ENCODE measurements at regions of chr6 and their contacts with region 1.

Region 1: GRCh38 chr6:20092071-20092566 is 120.2 kb downstream of the MBOAT1 start:
- DNase-seq: no peak
- H3K4me3 ChIP-seq: no peak overlapping the region
- H3K27ac ChIP-seq: no peak overlapping the region
- H3K4me1 ChIP-seq: peaks cover 0 to 6% (median 5%) of the 10 kb centered on the region in 4 donors
- H3K27me3 ChIP-seq: no peaks in the 10 kb centered on the region
- CTCF ChIP-seq: peak; percentile 74 to 79 (median 74)
- EP300 ChIP-seq: no peak
- POLR2A ChIP-seq: no peak

Region 2: DNA sequence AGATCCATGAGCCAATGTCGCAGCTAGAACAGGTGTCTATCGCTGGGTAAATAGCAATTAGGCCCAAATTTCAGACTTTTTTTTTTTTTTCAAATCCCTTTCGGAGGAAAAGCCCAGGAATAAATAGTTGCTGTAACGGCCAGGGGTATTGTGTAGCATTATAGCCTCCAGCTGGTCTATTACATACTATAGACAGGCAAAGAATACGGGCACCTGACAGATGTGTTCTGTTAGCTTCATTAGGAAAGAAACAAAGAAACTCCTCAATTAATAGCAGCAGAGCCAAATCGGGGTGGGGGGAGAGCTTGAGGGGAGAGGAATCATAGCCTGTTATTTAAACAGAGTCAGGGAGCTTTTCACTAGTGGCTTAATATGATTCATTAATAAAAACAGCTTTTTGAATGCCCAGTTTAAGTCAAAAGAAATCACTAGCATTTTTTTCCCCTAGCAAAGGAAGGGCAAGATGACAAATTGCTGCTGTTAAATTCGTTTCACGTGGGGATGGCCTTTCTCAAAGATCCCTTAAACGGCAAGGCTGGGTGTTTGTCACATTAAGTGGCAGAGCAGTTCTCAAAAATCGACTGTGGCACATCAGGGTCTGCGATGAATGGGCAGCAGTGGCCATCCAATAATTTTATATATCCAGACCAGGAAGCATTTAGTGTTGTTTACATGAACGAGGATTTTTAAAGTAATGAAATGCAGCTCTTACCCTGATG is 115.5 kb before region 1 on chr6:
- intact Hi-C with region 1: no loop called
- DNase-seq: no peak
- H3K4me3 ChIP-seq: no peak overlapping the region
- H3K27ac ChIP-seq: no peak overlapping the region
- H3K4me1 ChIP-seq: peaks cover 0 to 14% (median 9%) of the 10 kb centered on the region in 4 donors
- H3K27me3 ChIP-seq: no peaks in the 10 kb centered on the region
- CTCF ChIP-seq: no peak
- EP300 ChIP-seq: no peak
- POLR2A ChIP-seq: no peak

Region 3: GRCh38 chr6:20126789-20127653 is 34.9 kb after region 1 on chr6:
- intact Hi-C with region 1: loop called (anchors 2 kb)
- DNase-seq: no peak
- H3K4me3 ChIP-seq: no peak overlapping the region
- H3K27ac ChIP-seq: peak overlapping the region; percentile 31 to 55 (median 44)
- H3K4me1 ChIP-seq: peaks cover 15 to 28% (median 17%) of the 10 kb centered on the region in 4 donors
- H3K27me3 ChIP-seq: no peaks in the 10 kb centered on the region
- CTCF ChIP-seq: peak; percentile 86 to 95 (median 90)
- EP300 ChIP-seq: no peak
- POLR2A ChIP-seq: no peak

Region 4: GRCh38 chr6:20291764-20292580 is 199.9 kb after region 1 on chr6:
- intact Hi-C with region 1: loop called (anchors 5 kb)
- DNase-seq: peak; percentile 96
- H3K4me3 ChIP-seq: no peak overlapping the region
- H3K27ac ChIP-seq: no peak overlapping the region
- H3K4me1 ChIP-seq: peaks cover 0 to 4% (median 0%) of the 10 kb centered on the region in 4 donors
- H3K27me3 ChIP-seq: no peaks in the 10 kb centered on the region
- CTCF ChIP-seq: peak; percentile 88 to 95 (median 88)
- EP300 ChIP-seq: no peak
- POLR2A ChIP-seq: no peak

Region 5: DNA sequence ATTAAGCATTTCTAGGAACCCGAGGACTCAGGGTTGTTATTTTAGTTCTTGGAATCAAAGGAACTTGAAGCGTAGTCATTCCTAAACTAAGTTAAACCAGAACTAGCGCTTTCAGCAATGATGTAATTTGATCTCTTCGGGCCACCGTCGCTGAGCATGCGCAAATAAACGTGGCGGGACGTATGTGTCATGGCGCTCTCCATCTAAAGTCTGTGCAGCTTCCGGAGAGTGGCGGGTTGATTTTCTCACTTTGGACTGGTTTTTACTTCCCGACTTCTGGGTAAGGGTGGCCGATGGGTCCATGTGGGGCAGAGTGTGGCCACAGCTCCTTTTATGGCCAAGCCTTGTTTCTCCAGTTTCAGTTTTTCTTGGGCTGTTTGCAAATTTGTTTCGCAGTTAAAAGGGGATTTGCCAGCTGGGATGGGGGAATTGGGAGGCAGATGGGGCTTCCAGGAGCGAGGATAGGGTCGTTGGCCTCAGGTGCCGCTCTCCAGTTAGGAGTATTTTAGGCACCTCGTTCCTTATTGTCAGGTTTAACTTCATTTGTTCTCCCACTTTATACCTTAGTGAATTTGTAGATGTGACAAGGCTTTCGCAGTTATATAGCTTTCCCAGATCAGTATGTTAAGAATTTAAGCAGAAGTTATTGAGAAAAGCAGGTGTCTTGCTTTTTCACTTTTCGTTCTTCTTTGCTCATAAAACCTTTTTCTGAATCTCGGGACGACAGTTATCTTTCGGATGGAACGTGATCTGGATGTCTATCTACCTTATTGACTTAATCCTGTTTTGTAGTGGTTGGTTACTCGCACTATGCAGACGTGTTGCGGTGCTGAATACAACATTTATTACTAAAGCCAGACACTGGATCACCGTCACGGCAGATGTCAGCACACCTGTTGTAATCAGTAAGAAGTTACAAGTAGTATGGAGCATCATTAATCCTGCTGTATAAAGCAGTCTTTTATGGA is 442.5 kb after region 1 on chr6 and contains the start of gene CDKAL1:
- intact Hi-C with region 1: loop called (anchors 5 kb)
- DNase-seq: peak; percentile 96
- H3K4me3 ChIP-seq: peak within 1 kb of the TSS; percentile 86 to 95 (median 88)
- H3K27ac ChIP-seq: peak within 1 kb of the TSS; percentile 84 to 93 (median 90)
- H3K4me1 ChIP-seq: peaks cover 11 to 32% (median 21%) of the 10 kb centered on the region in 4 donors
- H3K27me3 ChIP-seq: no peaks in the 10 kb centered on the region
- CTCF ChIP-seq: peak in 1 of 3 experiments; percentile 19
- EP300 ChIP-seq: no peak
- POLR2A ChIP-seq: no peak
- total RNA-seq, gene CDKAL1: 10.3 to 11.2 (median 10.5) TPM

Region 6: GRCh38 chr6:20610636-20611370 is 518.7 kb after region 1 on chr6:
- intact Hi-C with region 1: no loop called
- DNase-seq: no peak
- H3K4me3 ChIP-seq: no peak overlapping the region
- H3K27ac ChIP-seq: no peak overlapping the region
- H3K4me1 ChIP-seq: no peaks in the 10 kb centered on the region
- H3K27me3 ChIP-seq: no peaks in the 10 kb centered on the region
- CTCF ChIP-seq: no peak
- EP300 ChIP-seq: no peak
- POLR2A ChIP-seq: no peak

Measured in esophagus muscularis mucosa (tissue), 4 donors.